ENCODE measurements at regions of chr1 and their contacts with region 1.

Region 1: DNA sequence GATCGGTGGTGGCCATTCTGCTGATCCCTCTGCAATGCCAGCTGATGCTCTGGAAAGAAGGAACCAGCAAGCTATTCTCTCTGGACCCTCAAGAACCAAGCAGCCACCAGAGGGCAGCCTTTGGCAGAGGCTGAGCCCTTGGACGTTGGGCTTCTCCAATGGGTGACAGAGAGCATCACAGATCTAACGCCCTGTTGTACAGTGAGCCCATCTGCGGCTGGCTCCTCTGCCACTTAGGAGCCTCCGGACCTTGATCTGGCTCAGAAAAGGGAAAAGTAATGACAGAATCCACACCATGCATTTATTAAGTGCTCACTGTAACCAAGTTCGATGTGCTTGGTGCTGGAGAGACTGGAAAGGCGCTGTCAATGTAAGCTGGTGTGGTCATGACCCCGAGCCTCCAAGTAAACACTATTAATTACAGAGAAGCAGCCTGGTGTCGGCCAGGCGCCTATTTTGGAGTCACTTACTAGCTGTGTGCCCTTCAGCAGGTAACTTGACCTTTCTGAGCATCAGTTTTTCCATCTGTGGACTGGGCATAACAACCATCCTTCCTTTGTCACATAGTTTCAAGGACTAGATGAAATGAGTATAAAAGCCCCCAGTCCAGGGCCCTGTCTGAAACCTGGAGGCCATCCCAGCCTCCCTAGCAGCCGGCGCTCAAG is 34.9 kb downstream of the ECE1 start:
- DNase-seq: peak; percentile 87
- ATAC-seq: peak; percentile 79
- H3K4me3 Mint-ChIP-seq: no peak overlapping the region
- H3K27ac Mint-ChIP-seq: no peak overlapping the region
- H3K4me1 Mint-ChIP-seq: peaks cover 36% of the 10 kb centered on the region
- H3K27me3 Mint-ChIP-seq: no peaks in the 10 kb centered on the region

Region 2: GRCh38 chr1:20992322-20993056 is 262.9 kb before region 1 on chr1:
- CTCF ChIA-PET with region 1: no interaction called
- POLR2A ChIA-PET with region 1: no interaction called
- DNase-seq: no peak
- ATAC-seq: no peak
- H3K4me3 Mint-ChIP-seq: no peak overlapping the region
- H3K27ac Mint-ChIP-seq: no peak overlapping the region
- H3K4me1 Mint-ChIP-seq: peaks cover 22% of the 10 kb centered on the region
- H3K27me3 Mint-ChIP-seq: no peaks in the 10 kb centered on the region

Region 3: DNA sequence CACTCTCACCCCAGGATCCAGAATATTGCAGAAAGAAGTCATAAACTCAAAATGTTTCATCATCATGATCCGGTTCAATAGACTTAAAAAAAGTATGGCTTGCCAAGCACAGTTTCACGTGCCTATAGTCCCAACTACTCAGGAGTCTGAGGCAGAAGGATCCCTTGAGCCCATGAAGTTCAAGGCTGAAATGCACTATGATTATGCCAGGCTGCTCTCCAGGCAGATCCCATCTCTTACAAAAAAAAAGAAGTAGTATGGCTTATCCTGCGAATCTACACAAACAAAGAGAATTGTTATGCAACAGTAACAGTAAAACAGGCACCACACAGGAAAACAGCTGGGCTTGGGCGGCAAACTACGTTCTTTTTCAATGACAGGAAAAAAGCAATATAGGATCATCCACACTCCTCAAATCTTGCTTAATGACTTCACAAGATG is 154.9 kb before region 1 on chr1:
- CTCF ChIA-PET with region 1: no interaction called
- POLR2A ChIA-PET with region 1: no interaction called
- DNase-seq: no peak
- ATAC-seq: no peak
- H3K4me3 Mint-ChIP-seq: no peak overlapping the region
- H3K27ac Mint-ChIP-seq: no peak overlapping the region
- H3K4me1 Mint-ChIP-seq: no peaks in the 10 kb centered on the region
- H3K27me3 Mint-ChIP-seq: no peaks in the 10 kb centered on the region

Region 4: DNA sequence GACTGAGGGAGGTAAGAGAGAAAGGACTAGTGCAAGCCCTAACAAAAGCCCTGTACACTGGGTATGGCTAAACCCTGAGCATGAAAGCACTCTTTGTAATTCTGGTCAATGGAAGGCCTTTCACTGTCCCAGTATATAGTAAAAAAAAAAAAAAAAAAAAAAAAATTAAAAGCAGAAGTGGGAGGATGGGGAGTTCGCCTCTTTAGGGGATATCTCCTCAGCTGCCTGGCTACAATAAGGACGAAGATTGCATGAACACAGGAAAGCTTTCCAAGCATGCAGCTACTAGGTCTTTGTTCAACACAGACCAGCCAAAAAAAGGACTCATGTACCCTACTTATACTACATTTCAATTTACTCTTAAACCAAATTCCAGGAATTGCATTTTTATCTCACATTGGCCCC is 137.8 kb before region 1 on chr1:
- CTCF ChIA-PET with region 1: no interaction called
- POLR2A ChIA-PET with region 1: no interaction called
- DNase-seq: no peak
- ATAC-seq: no peak
- H3K4me3 Mint-ChIP-seq: no peak overlapping the region
- H3K27ac Mint-ChIP-seq: no peak overlapping the region
- H3K4me1 Mint-ChIP-seq: no peaks in the 10 kb centered on the region
- H3K27me3 Mint-ChIP-seq: no peaks in the 10 kb centered on the region

Region 5: GRCh38 chr1:21232044-21232443 is 23.4 kb before region 1 on chr1:
- CTCF ChIA-PET with region 1: interaction called, 16 read pairs
- POLR2A ChIA-PET with region 1: no interaction called
- DNase-seq: peak; percentile 52
- ATAC-seq: no peak
- H3K4me3 Mint-ChIP-seq: no peak overlapping the region
- H3K27ac Mint-ChIP-seq: no peak overlapping the region
- H3K4me1 Mint-ChIP-seq: no peaks in the 10 kb centered on the region
- H3K27me3 Mint-ChIP-seq: no peaks in the 10 kb centered on the region

Region 6: GRCh38 chr1:21324368-21325141 is 69.1 kb after region 1 on chr1:
- CTCF ChIA-PET with region 1: interaction called, 18 read pairs
- POLR2A ChIA-PET with region 1: no interaction called
- DNase-seq: peak; percentile 61
- ATAC-seq: peak; percentile 72
- H3K4me3 Mint-ChIP-seq: peak overlapping the region; percentile 42
- H3K27ac Mint-ChIP-seq: peak overlapping the region; percentile 75
- H3K4me1 Mint-ChIP-seq: peaks cover 70% of the 10 kb centered on the region
- H3K27me3 Mint-ChIP-seq: no peaks in the 10 kb centered on the region

Region 7: GRCh38 chr1:21334214-21335087 is 79.0 kb after region 1 on chr1:
- CTCF ChIA-PET with region 1: interaction called, 19 read pairs
- POLR2A ChIA-PET with region 1: interaction called, 5 read pairs
- DNase-seq: peak; percentile 92
- ATAC-seq: peak; percentile 92
- H3K4me3 Mint-ChIP-seq: peak overlapping the region; percentile 75
- H3K27ac Mint-ChIP-seq: peak overlapping the region; percentile 89
- H3K4me1 Mint-ChIP-seq: peaks cover 86% of the 10 kb centered on the region
- H3K27me3 Mint-ChIP-seq: no peaks in the 10 kb centered on the region

Region 8: GRCh38 chr1:21344750-21345443 is 89.5 kb after region 1 on chr1:
- CTCF ChIA-PET with region 1: interaction called, 15 read pairs
- POLR2A ChIA-PET with region 1: interaction called, 6 read pairs
- DNase-seq: peak; percentile 42
- ATAC-seq: peak; percentile 41
- H3K4me3 Mint-ChIP-seq: peak overlapping the region; percentile 87
- H3K27ac Mint-ChIP-seq: peak overlapping the region; percentile 91
- H3K4me1 Mint-ChIP-seq: peaks cover 42% of the 10 kb centered on the region
- H3K27me3 Mint-ChIP-seq: no peaks in the 10 kb centered on the region

Region 9: DNA sequence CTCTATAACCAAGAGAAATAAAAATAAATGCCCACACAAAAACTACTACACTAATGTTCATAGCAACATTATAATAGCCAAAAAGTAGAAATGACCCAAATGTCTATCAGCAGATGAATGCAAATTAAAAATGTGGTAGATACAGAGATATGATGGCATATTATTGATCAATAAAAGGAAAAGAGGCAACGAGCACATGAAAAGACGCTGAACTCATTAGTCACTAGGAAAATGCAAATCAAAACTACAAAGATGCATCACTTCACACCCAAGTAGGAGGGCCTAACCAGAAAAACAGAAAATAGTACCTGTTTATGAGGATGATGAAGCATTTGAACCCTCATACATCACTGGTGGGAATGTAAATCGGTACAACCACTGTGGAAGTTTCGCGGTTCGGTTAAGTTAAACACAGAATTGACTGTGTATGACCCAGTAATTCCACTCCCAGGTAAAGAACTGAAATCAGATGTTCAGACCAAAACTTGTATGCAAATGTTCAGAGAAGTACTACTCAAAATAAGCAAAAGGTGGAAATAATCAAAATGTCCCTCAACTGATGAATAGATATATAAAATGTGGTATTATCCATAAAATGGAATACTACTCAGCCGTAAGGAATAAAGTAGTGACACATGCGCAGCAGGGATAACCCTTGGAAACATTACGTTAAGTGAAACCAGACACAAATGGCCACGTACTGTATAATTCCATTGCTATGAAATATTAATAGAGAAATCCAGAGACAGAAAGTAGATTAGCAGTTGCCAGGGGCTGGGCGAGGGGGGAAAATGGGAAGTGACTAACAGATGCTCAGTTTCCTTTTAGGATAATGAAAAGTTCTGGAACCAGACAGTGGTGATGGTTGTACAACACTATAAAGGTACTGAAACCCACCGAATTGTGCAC is 524.5 kb after region 1 on chr1:
- CTCF ChIA-PET with region 1: no interaction called
- POLR2A ChIA-PET with region 1: no interaction called
- DNase-seq: peak; percentile 37
- ATAC-seq: no peak
- H3K4me3 Mint-ChIP-seq: peak overlapping the region; percentile 67
- H3K27ac Mint-ChIP-seq: peak overlapping the region; percentile 54
- H3K4me1 Mint-ChIP-seq: peaks cover 46% of the 10 kb centered on the region
- H3K27me3 Mint-ChIP-seq: no peaks in the 10 kb centered on the region

Measured in activated CD8-positive, alpha-beta T cell treated with anti-CD3 and anti-CD28 coated beads, Interleukin-2, amount 10 ng/mL, durations not matched to agents 7 days and 5 days (primary cell).